Naive thymus-derived CD4-positive, alpha-beta T cell (primary cell): ENCODE measurements at regions of chr4 and their contacts with region 1.

Region 1: GRCh38 chr4:177367336-177367735 is 57.7 kb downstream of the NEIL3 start:
- DNase-seq: peak in 4 of 9 donors; percentile 18 to 45 (median 30)
- ATAC-seq: peak; percentile 37
- H3K4me3 ChIP-seq: no peak overlapping the region
- H3K4me3 Mint-ChIP-seq: no peak overlapping the region
- H3K27ac ChIP-seq: no peak overlapping the region
- H3K27ac Mint-ChIP-seq: peak overlapping the region in 1 of 9 donors; percentile 3
- H3K4me1 ChIP-seq: no peaks in the 10 kb centered on the region
- H3K4me1 Mint-ChIP-seq: peaks cover 0 to 17% (median 0%) of the 10 kb centered on the region in 7 donors
- H3K27me3 ChIP-seq: no peaks in the 10 kb centered on the region
- H3K27me3 Mint-ChIP-seq: peaks cover 0 to 3% (median 0%) of the 10 kb centered on the region in 5 donors

Region 2: DNA sequence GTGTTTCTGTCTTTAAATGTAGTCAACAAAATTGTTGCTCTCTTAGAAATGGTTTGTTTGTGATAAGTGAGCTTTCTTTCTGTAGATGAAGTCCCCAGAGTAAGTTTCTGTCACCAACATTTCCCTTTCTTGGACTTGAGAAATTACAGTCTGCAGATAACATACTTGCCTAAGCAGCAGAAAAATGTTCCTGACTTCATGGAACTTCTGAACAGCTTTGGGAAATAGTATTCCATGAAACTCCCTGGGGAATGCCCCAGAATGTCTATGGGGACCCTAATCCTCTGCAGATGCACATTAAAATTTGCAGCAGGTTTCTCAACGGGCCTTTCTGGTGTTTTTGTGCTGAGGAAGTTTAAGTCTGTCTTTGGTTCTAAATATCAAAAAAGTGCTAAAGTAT is 96.2 kb before region 1 on chr4:
- CTCF ChIA-PET with region 1: no interaction called
- POLR2A ChIA-PET with region 1: no interaction called
- intact Hi-C with region 1: no loop called
- DNase-seq: no peak
- ATAC-seq: no peak
- H3K4me3 ChIP-seq: no peak overlapping the region
- H3K4me3 Mint-ChIP-seq: no peak overlapping the region
- H3K27ac ChIP-seq: no peak overlapping the region
- H3K27ac Mint-ChIP-seq: no peak overlapping the region
- H3K4me1 ChIP-seq: no peaks in the 10 kb centered on the region
- H3K4me1 Mint-ChIP-seq: no peaks in the 10 kb centered on the region
- H3K27me3 ChIP-seq: no peaks in the 10 kb centered on the region
- H3K27me3 Mint-ChIP-seq: peaks cover 0 to 9% (median 0%) of the 10 kb centered on the region in 5 donors

Region 3: GRCh38 chr4:177293208-177294033 is 73.9 kb before region 1 on chr4:
- CTCF ChIA-PET with region 1: no interaction called
- POLR2A ChIA-PET with region 1: no interaction called
- intact Hi-C with region 1: no loop called
- DNase-seq: no peak
- ATAC-seq: no peak
- H3K4me3 ChIP-seq: no peak overlapping the region
- H3K4me3 Mint-ChIP-seq: no peak overlapping the region
- H3K27ac ChIP-seq: no peak overlapping the region
- H3K27ac Mint-ChIP-seq: peak overlapping the region in 1 of 9 donors; percentile 55
- H3K4me1 ChIP-seq: no peaks in the 10 kb centered on the region
- H3K4me1 Mint-ChIP-seq: no peaks in the 10 kb centered on the region
- H3K27me3 ChIP-seq: no peaks in the 10 kb centered on the region
- H3K27me3 Mint-ChIP-seq: peaks cover 0 to 9% (median 0%) of the 10 kb centered on the region in 5 donors

Region 4: GRCh38 chr4:177349188-177349587 is 18.1 kb before region 1 on chr4:
- CTCF ChIA-PET with region 1: no interaction called
- POLR2A ChIA-PET with region 1: no interaction called
- intact Hi-C with region 1: no loop called
- DNase-seq: no peak
- ATAC-seq: no peak
- H3K4me3 ChIP-seq: no peak overlapping the region
- H3K4me3 Mint-ChIP-seq: no peak overlapping the region
- H3K27ac ChIP-seq: no peak overlapping the region
- H3K27ac Mint-ChIP-seq: no peak overlapping the region
- H3K4me1 ChIP-seq: no peaks in the 10 kb centered on the region
- H3K4me1 Mint-ChIP-seq: peaks cover 0 to 7% (median 0%) of the 10 kb centered on the region in 7 donors
- H3K27me3 ChIP-seq: no peaks in the 10 kb centered on the region
- H3K27me3 Mint-ChIP-seq: no peaks in the 10 kb centered on the region

Region 5: DNA sequence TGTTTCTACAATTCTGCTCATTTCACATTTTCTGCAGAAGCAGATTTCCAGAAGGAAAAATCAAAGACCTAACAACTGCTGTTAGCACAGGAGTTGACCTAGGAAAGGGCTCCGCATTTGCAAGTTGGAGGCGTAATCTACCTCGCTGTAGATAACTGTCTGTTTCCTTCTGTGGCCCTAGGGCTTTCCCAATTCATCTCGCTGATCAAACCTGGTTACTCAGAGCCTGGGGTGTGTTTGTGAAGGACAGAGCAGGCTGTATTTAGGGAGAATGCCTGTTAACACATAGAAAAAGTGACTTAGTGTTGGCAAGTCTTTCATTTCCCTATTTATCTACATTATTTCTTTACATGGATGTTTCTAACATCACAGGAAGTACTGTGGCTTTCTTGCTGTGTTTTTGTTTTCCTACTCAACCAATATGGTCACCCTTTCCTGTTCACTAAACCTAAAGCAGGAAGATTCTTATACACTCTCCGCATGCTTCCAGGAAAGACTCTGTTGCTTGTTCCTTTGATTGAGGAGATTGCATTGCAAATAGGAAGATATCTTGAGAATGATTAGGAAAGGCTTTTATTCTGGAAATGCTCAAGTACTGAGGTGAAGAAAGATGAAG is 34.4 kb after region 1 on chr4:
- CTCF ChIA-PET with region 1: no interaction called
- POLR2A ChIA-PET with region 1: no interaction called
- intact Hi-C with region 1: loop called in 1 of 2 experiments (anchors 5 kb)
- DNase-seq: peak in 5 of 9 donors; percentile 14 to 35 (median 27)
- ATAC-seq: peak; percentile 38
- H3K4me3 ChIP-seq: peak overlapping the region; percentile 14
- H3K4me3 Mint-ChIP-seq: peak overlapping the region; percentile 2 to 74 (median 46)
- H3K27ac ChIP-seq: no peak overlapping the region
- H3K27ac Mint-ChIP-seq: peak overlapping the region; percentile 13 to 89 (median 82)
- H3K4me1 ChIP-seq: peaks cover 14 to 25% of the 10 kb centered on the region in 2 donors
- H3K4me1 Mint-ChIP-seq: peaks cover 24 to 47% (median 35%) of the 10 kb centered on the region in 7 donors
- H3K27me3 ChIP-seq: no peaks in the 10 kb centered on the region
- H3K27me3 Mint-ChIP-seq: peaks cover 0 to 13% (median 0%) of the 10 kb centered on the region in 5 donors

Region 6: DNA sequence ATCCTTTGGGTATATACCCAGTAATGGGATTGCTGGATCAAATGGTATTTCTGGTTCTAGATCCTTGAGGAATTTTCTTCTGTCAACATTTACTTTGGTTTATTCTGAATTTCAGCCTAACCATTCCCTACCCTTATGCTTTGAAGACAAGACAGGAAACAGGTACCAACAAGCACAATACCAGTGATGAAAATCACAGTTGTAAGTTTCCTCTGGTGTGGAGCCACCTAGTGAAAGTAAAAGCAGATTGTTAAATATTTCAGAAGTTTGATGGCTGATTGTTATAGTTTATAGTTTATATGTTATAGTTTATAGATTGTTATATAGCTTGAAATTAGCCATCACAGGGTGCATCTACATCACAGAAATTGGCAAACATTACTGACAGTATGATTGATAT is 179.4 kb after region 1 on chr4:
- CTCF ChIA-PET with region 1: interaction called, 3 read pairs
- POLR2A ChIA-PET with region 1: no interaction called
- intact Hi-C with region 1: loop called (anchors 1 to 2 kb)
- DNase-seq: peak in 3 of 9 donors; percentile 16 to 37 (median 24)
- ATAC-seq: no peak
- H3K4me3 ChIP-seq: no peak overlapping the region
- H3K4me3 Mint-ChIP-seq: no peak overlapping the region
- H3K27ac ChIP-seq: no peak overlapping the region
- H3K27ac Mint-ChIP-seq: no peak overlapping the region
- H3K4me1 ChIP-seq: no peaks in the 10 kb centered on the region
- H3K4me1 Mint-ChIP-seq: no peaks in the 10 kb centered on the region
- H3K27me3 ChIP-seq: no peaks in the 10 kb centered on the region
- H3K27me3 Mint-ChIP-seq: no peaks in the 10 kb centered on the region

Region 7: GRCh38 chr4:177638871-177639270 is 271.5 kb after region 1 on chr4:
- CTCF ChIA-PET with region 1: no interaction called
- POLR2A ChIA-PET with region 1: no interaction called
- intact Hi-C with region 1: no loop called
- DNase-seq: no peak
- ATAC-seq: no peak
- H3K4me3 ChIP-seq: no peak overlapping the region
- H3K4me3 Mint-ChIP-seq: no peak overlapping the region
- H3K27ac ChIP-seq: no peak overlapping the region
- H3K27ac Mint-ChIP-seq: no peak overlapping the region
- H3K4me1 ChIP-seq: no peaks in the 10 kb centered on the region
- H3K4me1 Mint-ChIP-seq: no peaks in the 10 kb centered on the region
- H3K27me3 ChIP-seq: no peaks in the 10 kb centered on the region
- H3K27me3 Mint-ChIP-seq: no peaks in the 10 kb centered on the region